Ovary (tissue), 10 donors: ENCODE measurements at regions of chr13 and their contacts with region 1.

Region 1: GRCh38 chr13:42001580-42001979 is 40.7 kb upstream of the VWA8 start:
- DNase-seq: peak; percentile 36 to 59 (median 56)
- H3K4me3 ChIP-seq: no peak overlapping the region
- H3K27ac ChIP-seq: peak overlapping the region in 1 of 2 donors; percentile 0
- H3K4me1 ChIP-seq: peaks cover 3% of the 10 kb centered on the region
- H3K27me3 ChIP-seq: no peaks in the 10 kb centered on the region
- CTCF ChIP-seq: no peak
- EP300 ChIP-seq: no peak
- POLR2A ChIP-seq: no peak

Region 2: DNA sequence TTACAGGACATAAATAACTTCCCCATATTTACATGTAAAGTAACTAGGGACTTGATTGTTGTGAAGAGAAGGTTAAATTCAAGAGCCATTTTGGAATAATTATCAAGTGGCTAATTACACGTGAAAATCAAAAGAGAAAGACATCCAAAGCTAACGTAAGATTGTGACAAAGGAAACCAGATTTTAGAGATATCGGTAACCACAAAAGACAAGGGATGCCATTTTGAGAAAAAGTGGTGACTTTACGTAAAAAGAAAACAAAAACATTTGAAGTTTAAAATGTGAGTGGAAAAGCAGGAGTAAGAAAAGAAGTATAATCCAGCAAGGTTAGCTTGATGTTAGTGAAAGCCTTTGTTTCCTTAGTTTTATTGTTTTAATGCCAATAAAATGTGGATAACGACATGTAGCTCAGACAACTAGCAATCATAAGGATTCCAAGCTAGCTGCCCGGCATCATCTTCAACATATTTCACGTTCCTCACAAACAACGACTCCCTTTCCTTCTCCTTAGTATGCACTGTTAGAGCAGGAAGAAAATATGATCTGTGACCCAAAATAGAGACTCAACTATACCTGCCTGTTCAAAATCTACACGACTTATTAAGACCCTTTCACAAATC is 29.6 kb before region 1 on chr13:
- intact Hi-C with region 1: loop called in 1 of 4 experiments (anchors 1 kb)
- DNase-seq: no peak
- H3K4me3 ChIP-seq: no peak overlapping the region
- H3K27ac ChIP-seq: no peak overlapping the region
- H3K4me1 ChIP-seq: no peaks in the 10 kb centered on the region
- H3K27me3 ChIP-seq: no peaks in the 10 kb centered on the region
- CTCF ChIP-seq: no peak
- EP300 ChIP-seq: no peak
- POLR2A ChIP-seq: no peak